HCT116 (cell line): ENCODE measurements at regions of chr17 and their contacts with region 1.

Region 1: DNA sequence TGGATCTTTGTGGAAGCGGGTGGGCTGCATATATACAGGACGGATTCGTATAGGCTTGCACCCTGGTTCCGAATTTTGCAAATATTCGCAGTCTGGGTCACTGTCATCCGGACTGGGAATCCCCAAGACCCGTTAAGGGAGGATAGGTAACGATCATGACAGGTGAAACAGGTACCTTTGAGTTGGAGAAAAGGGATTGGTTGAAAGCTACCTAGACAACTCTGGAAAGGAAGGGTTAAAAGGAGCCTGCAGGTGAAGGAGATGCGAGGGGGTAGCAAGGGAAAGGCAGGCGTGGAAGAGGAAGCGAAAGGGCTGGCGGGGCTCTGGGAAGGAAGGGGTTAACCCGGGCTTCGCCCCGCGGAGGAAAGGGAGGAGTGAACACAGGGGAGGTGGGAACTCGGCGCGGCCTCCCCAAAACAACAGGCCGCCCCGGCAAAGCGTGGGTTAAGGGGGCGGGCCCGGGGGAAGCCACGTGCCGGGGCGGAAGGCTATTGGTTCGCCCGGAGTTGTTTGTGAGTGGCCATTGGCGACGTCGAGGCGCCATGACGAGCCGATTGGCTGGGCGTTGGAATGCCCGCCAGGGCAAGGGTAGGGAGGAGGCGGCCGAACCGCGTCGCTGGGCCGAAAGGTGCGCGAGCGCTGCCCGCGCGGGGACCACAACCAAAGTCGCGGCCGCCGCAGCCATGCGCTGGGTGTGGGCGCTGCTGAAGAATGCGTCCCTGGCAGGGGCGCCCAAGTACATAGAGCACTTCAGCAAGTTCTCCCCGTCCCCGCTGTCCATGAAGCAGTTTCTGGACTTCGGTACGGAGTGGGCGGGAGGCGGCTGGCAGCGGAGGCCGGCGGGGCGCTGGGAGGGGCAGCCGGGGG is at the start of gene PDK2:
- DNase-seq: peak; percentile 96
- ATAC-seq: peak; percentile 92
- H3K4me3 ChIP-seq: peak within 1 kb of the TSS; percentile 84 to 96
- H3K27ac ChIP-seq: peak within 1 kb of the TSS; percentile 64
- H3K4me1 ChIP-seq: peaks cover 14 to 37% of the 10 kb centered on the region in 2 experiments
- H3K27me3 ChIP-seq: no peaks in the 10 kb centered on the region
- CTCF ChIP-seq: no peak
- POLR2A ChIP-seq: no peak
- RAD21 ChIP-seq: no peak
- total RNA-seq, gene PDK2: 39.1 TPM

Region 2: GRCh38 chr17:50055426-50056230 is 39.4 kb before region 1 on chr17 and contains the start of gene ITGA3:
- CTCF ChIA-PET with region 1: interaction called, 12 read pairs
- POLR2A ChIA-PET with region 1: interaction called, 18 read pairs
- RAD21 ChIA-PET with region 1: no interaction called
- intact Hi-C with region 1: no loop called
- DNase-seq: peak; percentile 98
- ATAC-seq: peak; percentile 61
- H3K4me3 ChIP-seq: peak within 1 kb of the TSS; percentile 82 to 88
- H3K27ac ChIP-seq: peak within 1 kb of the TSS; percentile 93
- H3K4me1 ChIP-seq: peaks cover 76 to 86% of the 10 kb centered on the region in 2 experiments
- H3K27me3 ChIP-seq: no peaks in the 10 kb centered on the region
- CTCF ChIP-seq: no peak
- POLR2A ChIP-seq: no peak
- RAD21 ChIP-seq: no peak
- total RNA-seq, gene ITGA3: 392 TPM

Region 3: DNA sequence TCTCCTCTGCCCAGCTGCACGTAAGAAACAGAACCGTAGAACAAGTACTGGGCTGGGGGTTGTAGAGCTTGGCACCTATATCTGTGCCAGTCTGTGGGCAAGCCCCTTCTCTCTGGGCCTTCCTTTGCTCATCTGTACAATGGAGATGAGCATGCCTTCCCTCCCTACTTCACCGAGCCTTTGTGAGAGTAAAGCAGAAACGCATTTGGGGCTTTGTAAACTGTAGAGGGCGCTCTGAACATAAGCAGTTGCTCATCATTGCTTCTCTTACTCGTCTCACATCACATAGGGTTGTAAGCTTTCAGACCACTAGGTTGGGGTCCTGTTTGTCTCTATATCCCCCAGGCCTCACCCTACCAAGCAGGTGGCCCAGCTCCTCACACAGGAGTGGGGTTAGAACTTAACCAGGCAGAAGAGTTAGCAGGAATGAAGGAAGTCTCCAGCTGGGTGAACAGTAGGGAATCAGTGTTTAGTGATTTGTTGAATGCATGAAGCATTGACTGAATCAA is 19.9 kb after region 1 on chr17:
- CTCF ChIA-PET with region 1: interaction called, 55 read pairs
- POLR2A ChIA-PET with region 1: no interaction called
- RAD21 ChIA-PET with region 1: no interaction called
- intact Hi-C with region 1: no loop called
- DNase-seq: peak; percentile 66
- ATAC-seq: peak; percentile 51
- H3K4me3 ChIP-seq: no peak overlapping the region
- H3K27ac ChIP-seq: no peak overlapping the region
- H3K4me1 ChIP-seq: peaks cover 7 to 22% of the 10 kb centered on the region in 2 experiments; a peak in 3 of 4 replicates
- H3K27me3 ChIP-seq: peaks cover 6% of the 10 kb centered on the region; the same call in 1 of the 2 replicates
- CTCF ChIP-seq: peak; percentile 88 to 98 (median 92)
- POLR2A ChIP-seq: no peak
- RAD21 ChIP-seq: no peak; the same call in 1 of the 2 replicates

Region 4: DNA sequence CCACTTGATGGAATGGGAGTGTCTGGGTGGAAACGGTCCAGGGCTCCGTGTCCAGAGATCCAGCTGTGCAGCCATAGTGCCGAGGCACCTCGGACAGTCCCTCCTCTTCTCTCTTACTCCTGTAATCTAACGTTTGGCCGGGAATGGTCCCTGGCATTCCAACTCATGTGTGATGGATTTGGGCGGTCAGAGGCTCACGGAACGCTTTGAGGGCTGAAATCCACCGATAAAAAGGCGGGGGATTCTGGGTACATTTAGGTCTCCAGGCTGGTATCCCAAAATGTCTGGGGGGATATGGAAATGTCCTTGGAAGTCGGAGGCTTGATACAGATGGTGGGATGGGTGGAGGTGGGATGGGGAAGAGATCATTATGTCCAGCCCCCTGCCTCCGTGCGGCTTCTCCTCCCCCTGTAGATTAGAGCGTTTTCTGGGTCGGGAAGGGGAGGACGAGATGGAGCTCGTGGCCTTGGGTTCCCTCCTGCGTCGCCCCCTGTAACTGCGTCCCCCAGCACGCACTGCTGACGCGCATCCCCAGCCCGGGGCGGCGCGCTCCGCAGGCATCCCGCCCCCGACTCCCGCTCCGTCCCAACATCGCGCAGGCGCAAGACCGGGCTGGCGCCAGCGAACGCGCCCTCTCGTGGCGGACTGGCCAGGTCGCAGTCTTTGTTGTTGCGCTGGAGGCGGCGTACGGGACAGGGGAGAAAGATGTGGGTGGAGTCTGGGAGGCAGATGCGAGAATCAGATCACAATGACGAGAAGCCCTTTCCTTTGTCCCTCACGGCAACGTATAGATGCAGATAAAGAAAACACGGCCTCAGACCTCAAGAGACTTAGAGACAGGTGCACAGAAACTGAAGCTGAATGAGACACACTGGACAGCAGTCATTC is 66.3 kb after region 1 on chr17:
- CTCF ChIA-PET with region 1: interaction called, 10 read pairs
- POLR2A ChIA-PET with region 1: no interaction called
- RAD21 ChIA-PET with region 1: no interaction called
- intact Hi-C with region 1: no loop called
- DNase-seq: peak; percentile 86
- ATAC-seq: peak; percentile 95
- H3K4me3 ChIP-seq: peak overlapping the region; percentile 46 to 59
- H3K27ac ChIP-seq: no peak overlapping the region; the same call in 1 of the 2 replicates
- H3K4me1 ChIP-seq: peaks cover 20 to 34% of the 10 kb centered on the region in 2 experiments
- H3K27me3 ChIP-seq: no peaks in the 10 kb centered on the region
- CTCF ChIP-seq: peak; percentile 97 to 98 (median 97)
- POLR2A ChIP-seq: peak; percentile 81
- RAD21 ChIP-seq: peak; percentile 90

Region 5: DNA sequence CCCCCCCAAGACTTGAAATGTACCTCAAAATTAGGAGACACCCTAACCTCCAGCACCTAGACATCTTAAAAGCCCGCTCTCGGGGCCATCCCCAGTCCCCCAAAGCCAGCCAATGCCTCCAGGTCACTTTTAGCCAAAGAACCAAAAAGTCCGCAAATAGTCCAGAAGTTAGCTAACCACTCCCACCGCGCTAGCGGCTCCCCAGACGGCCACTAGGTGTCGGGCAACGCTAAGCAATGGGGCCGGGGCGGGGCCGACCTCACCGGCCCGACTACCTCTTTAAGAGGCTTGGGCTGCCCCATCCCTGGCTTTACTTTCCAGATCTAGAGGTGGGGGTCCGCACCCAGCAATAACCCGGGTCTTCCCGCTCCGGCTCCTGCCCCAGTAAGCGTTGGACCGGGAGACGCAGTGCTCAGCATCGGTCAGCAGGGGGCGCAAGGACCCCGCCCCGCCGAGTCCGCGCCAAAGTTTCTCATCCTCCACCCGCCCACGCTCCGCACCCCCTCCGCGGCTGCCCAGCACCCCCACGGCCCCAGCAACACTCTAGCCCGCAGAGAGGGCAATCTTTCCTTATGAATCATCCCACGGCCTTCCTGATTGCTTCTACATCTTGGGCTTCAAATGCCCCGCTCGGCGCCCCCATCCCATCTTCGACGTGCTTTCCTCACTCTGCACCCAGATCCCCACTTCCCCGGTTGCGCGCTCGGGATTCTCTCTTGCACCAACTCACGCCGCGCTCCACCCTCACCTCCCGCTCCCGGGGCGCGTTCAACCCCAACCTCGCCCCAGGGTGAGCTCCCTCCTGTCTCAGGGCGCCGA is 105.7 kb after region 1 on chr17:
- CTCF ChIA-PET with region 1: interaction called, 15 read pairs
- POLR2A ChIA-PET with region 1: no interaction called
- RAD21 ChIA-PET with region 1: no interaction called
- intact Hi-C with region 1: no loop called
- DNase-seq: peak; percentile 88
- ATAC-seq: peak; percentile 72
- H3K4me3 ChIP-seq: peak overlapping the region; percentile 71 to 75
- H3K27ac ChIP-seq: peak overlapping the region; percentile 45; the same call in 1 of the 2 replicates
- H3K4me1 ChIP-seq: peaks cover 10 to 39% of the 10 kb centered on the region in 2 experiments
- H3K27me3 ChIP-seq: no peaks in the 10 kb centered on the region
- CTCF ChIP-seq: peak; percentile 99 to 100 (median 100)
- POLR2A ChIP-seq: no peak
- RAD21 ChIP-seq: peak; percentile 100